ENCODE measurements at regions of chr9 and their contacts with region 1.

Region 1: GRCh38 chr9:22855980-22856379 is 409.4 kb downstream of the DMRTA1 start:
- DNase-seq: no peak
- ATAC-seq: no peak
- H3K4me3 ChIP-seq: no peak overlapping the region
- H3K27ac ChIP-seq: no peak overlapping the region
- H3K4me1 ChIP-seq: no peaks in the 10 kb centered on the region
- H3K27me3 ChIP-seq: no peaks in the 10 kb centered on the region
- CTCF ChIP-seq: no peak
- POLR2A ChIP-seq: no peak

Region 2: DNA sequence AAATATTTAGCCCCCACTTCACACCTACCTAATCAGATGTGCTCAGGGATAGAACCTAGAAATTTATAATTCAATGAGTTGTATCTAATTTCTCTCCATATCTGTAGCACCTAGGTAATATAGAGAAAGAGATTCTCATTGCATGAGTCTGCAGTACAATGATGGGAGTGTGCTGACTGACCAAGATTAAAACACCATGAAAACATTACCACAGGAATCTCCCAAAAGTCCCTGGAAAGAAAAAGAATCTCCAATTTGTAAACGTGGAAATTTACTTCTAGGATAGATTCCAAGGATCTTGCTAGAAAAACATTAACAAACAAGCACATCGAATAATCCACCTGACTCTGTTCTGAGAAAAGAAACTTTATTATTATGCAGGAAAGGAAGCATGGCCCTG is 454.3 kb before region 1 on chr9:
- in situ Hi-C with region 1: no loop called
- intact Hi-C with region 1: no loop called
- DNase-seq: no peak
- ATAC-seq: no peak
- H3K4me3 ChIP-seq: no peak overlapping the region
- H3K27ac ChIP-seq: no peak overlapping the region
- H3K4me1 ChIP-seq: no peaks in the 10 kb centered on the region
- H3K27me3 ChIP-seq: no peaks in the 10 kb centered on the region
- CTCF ChIP-seq: no peak
- POLR2A ChIP-seq: no peak

Region 3: DNA sequence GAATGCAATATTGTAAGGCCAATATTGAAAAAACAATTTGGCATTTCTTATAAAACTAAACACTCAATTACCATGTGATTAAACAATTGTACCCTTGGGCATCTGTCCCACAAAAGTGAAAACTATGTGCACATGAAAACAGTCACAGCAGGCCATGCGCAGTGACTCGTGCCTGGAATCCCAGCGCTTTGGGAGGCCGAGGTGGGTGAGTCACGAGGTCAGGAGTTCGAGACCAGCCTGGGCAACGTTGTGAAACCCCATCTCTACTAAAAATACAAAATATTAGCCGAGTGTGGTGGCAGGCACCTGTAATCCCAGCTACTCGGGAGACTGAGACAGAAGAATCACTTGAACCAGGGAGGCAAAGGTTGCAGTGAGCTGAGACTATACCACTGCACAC is 65.7 kb before region 1 on chr9:
- in situ Hi-C with region 1: no loop called
- intact Hi-C with region 1: loop called (anchors 10 kb)
- DNase-seq: no peak
- ATAC-seq: no peak
- H3K4me3 ChIP-seq: no peak overlapping the region
- H3K27ac ChIP-seq: no peak overlapping the region
- H3K4me1 ChIP-seq: no peaks in the 10 kb centered on the region
- H3K27me3 ChIP-seq: no peaks in the 10 kb centered on the region
- CTCF ChIP-seq: no peak
- POLR2A ChIP-seq: no peak